ENCODE measurements at regions of chr7 and their contacts with region 1.

Region 1: GRCh38 chr7:152336754-152337368 is 98.9 kb downstream of the KMT2C start:
- DNase-seq: peak in 5 of 9 experiments; percentile 4 to 66 (median 17)
- ATAC-seq: peak; percentile 65
- H3K4me3 ChIP-seq: no peak overlapping the region
- H3K4me3 Mint-ChIP-seq: peak overlapping the region; percentile 78
- H3K27ac ChIP-seq: peak overlapping the region in 1 of 2 experiments; percentile 64
- H3K27ac Mint-ChIP-seq: no peak overlapping the region
- H3K4me1 ChIP-seq: peaks cover 25% of the 10 kb centered on the region
- H3K4me1 Mint-ChIP-seq: peaks cover 66% of the 10 kb centered on the region
- H3K27me3 ChIP-seq: no peaks in the 10 kb centered on the region
- H3K27me3 Mint-ChIP-seq: no peaks in the 10 kb centered on the region
- CTCF ChIP-seq: peak; percentile 61

Region 2: DNA sequence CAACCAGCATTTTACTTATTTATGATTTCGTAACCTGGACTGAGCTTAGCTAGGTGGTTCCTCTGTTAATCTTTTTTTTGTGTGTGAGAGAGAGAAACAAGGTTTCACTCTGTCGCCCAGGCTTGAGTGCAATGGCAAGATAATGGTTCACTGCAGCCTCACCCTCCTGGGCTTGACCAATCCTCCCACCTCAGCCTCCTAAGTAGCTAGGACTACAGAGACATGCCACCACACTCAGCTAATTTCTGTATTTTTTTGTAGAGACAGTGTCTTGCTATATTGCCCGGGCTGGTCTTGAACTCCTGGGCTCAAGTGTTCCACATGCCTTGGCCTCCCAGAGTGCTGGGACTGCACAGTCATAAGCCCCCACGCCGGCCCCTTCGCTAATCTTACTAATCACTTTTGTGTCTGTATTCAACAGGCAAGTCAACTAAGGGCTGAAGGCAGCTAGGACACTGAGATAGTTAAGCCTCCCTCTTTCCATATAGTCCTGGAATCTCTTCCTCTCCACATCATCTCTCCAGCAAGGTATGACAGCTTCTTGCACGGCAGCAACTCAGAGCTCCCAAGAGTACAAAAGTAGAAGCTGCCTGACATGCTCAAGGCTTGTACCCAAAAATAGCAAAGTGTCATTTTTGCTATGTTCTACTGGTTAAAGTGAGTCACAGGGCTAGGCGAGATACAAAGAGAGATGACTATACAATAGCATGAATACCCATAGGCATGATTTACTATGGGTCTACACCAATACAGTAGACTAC is 87.7 kb after region 1 on chr7:
- CTCF ChIA-PET with region 1: no interaction called
- POLR2A ChIA-PET with region 1: no interaction called
- intact Hi-C with region 1: loop called in 1 of 2 experiments (anchors 5 kb)
- DNase-seq: no peak
- ATAC-seq: no peak
- H3K4me3 ChIP-seq: no peak overlapping the region
- H3K4me3 Mint-ChIP-seq: no peak overlapping the region
- H3K27ac ChIP-seq: no peak overlapping the region
- H3K27ac Mint-ChIP-seq: no peak overlapping the region
- H3K4me1 ChIP-seq: peaks cover 33% of the 10 kb centered on the region
- H3K4me1 Mint-ChIP-seq: peaks cover 69% of the 10 kb centered on the region
- H3K27me3 ChIP-seq: no peaks in the 10 kb centered on the region
- H3K27me3 Mint-ChIP-seq: no peaks in the 10 kb centered on the region
- CTCF ChIP-seq: no peak

Region 3: GRCh38 chr7:152463709-152464311 is 126.9 kb after region 1 on chr7:
- CTCF ChIA-PET with region 1: interaction called, 3 read pairs
- POLR2A ChIA-PET with region 1: interaction called, 4 read pairs
- intact Hi-C with region 1: loop called in 1 of 2 experiments (anchors 10 kb)
- DNase-seq: peak; percentile 100
- ATAC-seq: peak; percentile 92
- H3K4me3 ChIP-seq: peak overlapping the region; percentile 90 to 91
- H3K4me3 Mint-ChIP-seq: peak overlapping the region; percentile 89
- H3K27ac ChIP-seq: peak overlapping the region; percentile 83 to 92
- H3K27ac Mint-ChIP-seq: peak overlapping the region; percentile 32
- H3K4me1 ChIP-seq: peaks cover 12% of the 10 kb centered on the region
- H3K4me1 Mint-ChIP-seq: peaks cover 11% of the 10 kb centered on the region
- H3K27me3 ChIP-seq: no peaks in the 10 kb centered on the region
- H3K27me3 Mint-ChIP-seq: no peaks in the 10 kb centered on the region
- CTCF ChIP-seq: no peak

Region 4: DNA sequence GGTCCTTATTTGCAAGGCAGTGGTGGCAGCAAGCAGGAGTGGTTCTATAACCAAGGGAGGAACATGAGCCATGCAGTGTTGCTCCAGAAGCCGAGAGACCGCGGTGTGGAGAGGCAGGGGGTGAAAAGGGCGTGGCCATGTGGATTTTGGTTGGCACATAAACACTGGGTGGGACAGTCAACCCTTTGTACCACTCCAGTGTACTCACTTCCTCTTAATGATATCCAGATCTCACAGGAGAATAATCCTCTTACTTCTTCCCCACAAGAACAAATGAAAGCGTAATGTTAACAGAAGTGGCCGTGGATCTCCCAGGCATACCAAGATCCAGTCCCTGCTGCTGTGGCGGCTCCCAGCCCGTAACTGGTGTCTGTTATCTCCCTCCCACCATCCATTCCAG is 296.6 kb after region 1 on chr7:
- CTCF ChIA-PET with region 1: no interaction called
- POLR2A ChIA-PET with region 1: no interaction called
- intact Hi-C with region 1: loop called in 1 of 2 experiments (anchors 10 kb)
- DNase-seq: no peak
- ATAC-seq: no peak
- H3K4me3 ChIP-seq: no peak overlapping the region
- H3K4me3 Mint-ChIP-seq: no peak overlapping the region
- H3K27ac ChIP-seq: no peak overlapping the region
- H3K27ac Mint-ChIP-seq: no peak overlapping the region
- H3K4me1 ChIP-seq: no peaks in the 10 kb centered on the region
- H3K4me1 Mint-ChIP-seq: no peaks in the 10 kb centered on the region
- H3K27me3 ChIP-seq: no peaks in the 10 kb centered on the region
- H3K27me3 Mint-ChIP-seq: peaks cover 2% of the 10 kb centered on the region
- CTCF ChIP-seq: no peak

Region 5: DNA sequence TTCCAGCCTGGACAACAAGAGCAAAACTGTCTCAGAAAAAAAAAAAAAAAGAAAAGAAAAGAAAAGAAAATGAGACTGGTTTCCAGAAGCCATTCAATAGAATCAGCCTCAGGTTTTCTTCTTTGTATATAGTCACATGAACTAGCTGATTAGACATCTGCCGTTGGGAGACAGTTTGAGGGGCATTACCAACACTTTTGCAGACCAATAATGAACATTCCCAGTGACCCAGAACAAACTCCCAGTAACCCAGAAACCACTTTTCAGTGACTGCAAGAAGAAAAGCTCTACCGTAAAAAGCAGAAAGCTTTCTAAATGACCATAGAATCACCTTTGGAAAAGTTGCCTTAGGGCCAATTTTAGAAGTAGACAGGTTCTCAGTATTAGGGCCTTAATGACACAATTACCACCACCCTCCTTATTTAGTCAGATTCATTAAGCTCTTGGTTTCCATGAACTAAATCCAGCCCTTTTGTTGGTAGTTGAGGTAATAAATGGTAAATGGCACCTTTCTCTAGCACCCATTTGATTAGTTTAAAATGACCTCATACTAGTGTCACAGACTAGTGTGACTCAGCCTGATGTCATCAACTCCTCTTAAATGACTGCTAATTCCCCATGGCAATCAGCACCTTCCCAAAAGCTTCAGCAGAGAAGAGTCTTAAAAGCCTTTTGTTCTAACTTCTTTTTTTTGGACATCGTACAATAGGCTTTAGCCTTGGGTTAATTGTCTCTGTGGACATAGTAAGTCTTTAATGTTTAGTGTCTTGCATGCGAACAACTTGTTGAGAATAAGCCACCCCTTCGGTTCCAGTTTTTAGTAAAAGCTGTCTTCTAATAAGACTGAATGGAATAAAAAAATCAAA is 372.7 kb after region 1 on chr7:
- CTCF ChIA-PET with region 1: interaction called, 24 read pairs
- POLR2A ChIA-PET with region 1: no interaction called
- intact Hi-C with region 1: loop called in 1 of 2 experiments (anchors 2 kb)
- DNase-seq: no peak
- ATAC-seq: no peak
- H3K4me3 ChIP-seq: no peak overlapping the region
- H3K4me3 Mint-ChIP-seq: no peak overlapping the region
- H3K27ac ChIP-seq: no peak overlapping the region
- H3K27ac Mint-ChIP-seq: no peak overlapping the region
- H3K4me1 ChIP-seq: no peaks in the 10 kb centered on the region
- H3K4me1 Mint-ChIP-seq: peaks cover 4% of the 10 kb centered on the region
- H3K27me3 ChIP-seq: peaks cover 0 to 2% of the 10 kb centered on the region in 2 experiments
- H3K27me3 Mint-ChIP-seq: peaks cover 2% of the 10 kb centered on the region
- CTCF ChIP-seq: no peak